ENCODE measurements at regions of chr13 and their contacts with region 1.

Region 1: DNA sequence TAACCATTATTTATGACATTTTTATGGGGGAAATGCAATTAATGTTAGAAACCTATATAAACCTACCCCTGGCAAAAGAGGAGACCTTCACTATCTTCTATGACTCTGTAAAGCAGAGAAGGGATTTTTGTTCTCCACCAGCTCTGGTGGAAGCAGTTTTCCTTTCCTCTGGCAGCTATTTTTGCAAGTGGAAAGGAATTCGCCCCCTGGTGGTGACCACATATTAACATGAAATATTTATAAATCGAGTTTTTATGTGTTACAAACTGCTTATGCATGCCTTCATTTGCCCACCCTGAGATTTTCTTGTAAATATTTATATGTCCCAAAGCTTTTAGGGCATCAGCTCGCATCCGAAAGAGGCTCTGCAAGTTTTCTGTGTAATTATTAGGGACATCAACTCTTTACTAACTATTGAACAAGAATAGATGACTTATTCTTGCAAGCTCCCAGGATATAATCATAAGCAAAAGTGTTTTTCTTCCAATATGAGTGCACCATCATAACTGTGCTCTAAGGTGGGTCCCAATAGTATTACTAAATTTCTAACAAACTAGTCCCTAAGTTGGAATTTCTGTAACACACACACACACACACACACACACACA is 62.4 kb downstream of the SERTM1 start:
- DNase-seq: no peak
- ATAC-seq: no peak

Region 2: GRCh38 chr13:36282818-36283445 is 453.3 kb before region 1 on chr13:
- intact Hi-C with region 1: loop called (anchors 5 kb)
- DNase-seq: no peak
- ATAC-seq: no peak

Region 3: GRCh38 chr13:36453516-36453915 is 282.7 kb before region 1 on chr13:
- intact Hi-C with region 1: loop called (anchors 1 kb)
- DNase-seq: no peak
- ATAC-seq: peak; percentile 67

Region 4: GRCh38 chr13:36848199-36848982 is 112.2 kb after region 1 on chr13:
- intact Hi-C with region 1: no loop called
- DNase-seq: no peak
- ATAC-seq: peak; percentile 37

Measured in Right ventricle myocardium inferior (tissue), 1 donor.